Activated naive CD4-positive, alpha-beta T cell treated with anti-CD3 and anti-CD28 coated beads for 36 hours (primary cell): ENCODE measurements at regions of chr14 and their contacts with region 1.

Region 1: GRCh38 chr14:100078991-100079725 is 13.9 kb downstream of the EVL start:
- DNase-seq: peak; percentile 78
- H3K4me3 Mint-ChIP-seq: peak overlapping the region; percentile 74
- H3K27ac Mint-ChIP-seq: peak overlapping the region; percentile 96
- H3K4me1 Mint-ChIP-seq: peaks cover 94% of the 10 kb centered on the region
- H3K27me3 Mint-ChIP-seq: no peaks in the 10 kb centered on the region

Region 2: DNA sequence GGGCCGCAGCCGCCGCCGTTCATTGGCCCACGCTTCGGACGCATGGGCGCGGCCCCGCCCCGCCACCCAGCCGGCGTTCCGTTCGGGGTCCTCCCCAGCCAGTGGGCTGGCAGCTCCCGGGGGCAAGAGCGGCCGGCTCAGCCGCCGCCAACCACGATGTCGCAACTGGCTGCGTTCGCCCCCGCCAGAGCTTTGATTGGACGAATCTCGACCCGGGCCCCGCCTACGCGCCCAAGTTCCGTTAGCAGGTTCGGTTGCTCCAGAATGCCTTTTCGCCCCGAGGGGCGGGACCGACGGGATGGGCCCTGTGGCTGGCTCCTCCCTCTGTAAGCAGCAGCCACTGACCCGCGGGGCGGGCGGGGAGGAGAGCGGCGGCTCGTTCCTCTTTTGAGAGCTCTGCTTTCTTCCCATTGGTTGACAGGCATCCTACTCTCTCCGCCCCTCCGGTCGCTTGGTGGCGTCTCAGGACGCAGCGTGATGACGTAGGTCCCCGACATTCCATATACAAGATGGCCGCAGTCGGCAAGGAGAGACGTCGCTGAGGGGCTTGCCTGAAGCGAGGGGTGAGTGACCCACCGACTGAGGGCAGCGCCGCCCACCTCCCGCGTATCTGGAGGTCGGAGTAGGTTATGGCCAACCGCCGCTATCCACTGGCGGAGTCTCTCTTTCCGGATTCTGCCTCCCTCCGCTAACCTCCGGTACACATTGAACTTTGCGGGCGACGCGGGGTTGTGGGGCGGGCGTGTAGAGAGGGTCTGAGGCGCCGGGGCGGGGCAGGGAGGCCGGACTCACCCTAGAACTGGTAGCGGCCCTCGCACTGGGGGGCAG is 598.0 kb before region 1 on chr14 and contains the start of gene CCNK:
- CTCF ChIA-PET with region 1: no interaction called
- intact Hi-C with region 1: loop called (anchors 10 kb)
- DNase-seq: peak; percentile 100
- H3K4me3 Mint-ChIP-seq: peak within 1 kb of the TSS; percentile 90
- H3K27ac Mint-ChIP-seq: peak within 1 kb of the TSS; percentile 91
- H3K4me1 Mint-ChIP-seq: peaks cover 53% of the 10 kb centered on the region
- H3K27me3 Mint-ChIP-seq: no peaks in the 10 kb centered on the region
- total RNA-seq, gene CCNK: 90.7 to 99.0 TPM

Region 3: GRCh38 chr14:99909513-99910064 is 169.6 kb before region 1 on chr14:
- CTCF ChIA-PET with region 1: no interaction called
- intact Hi-C with region 1: no loop called
- DNase-seq: no peak
- H3K4me3 Mint-ChIP-seq: no peak overlapping the region
- H3K27ac Mint-ChIP-seq: no peak overlapping the region
- H3K4me1 Mint-ChIP-seq: no peaks in the 10 kb centered on the region
- H3K27me3 Mint-ChIP-seq: no peaks in the 10 kb centered on the region

Region 4: DNA sequence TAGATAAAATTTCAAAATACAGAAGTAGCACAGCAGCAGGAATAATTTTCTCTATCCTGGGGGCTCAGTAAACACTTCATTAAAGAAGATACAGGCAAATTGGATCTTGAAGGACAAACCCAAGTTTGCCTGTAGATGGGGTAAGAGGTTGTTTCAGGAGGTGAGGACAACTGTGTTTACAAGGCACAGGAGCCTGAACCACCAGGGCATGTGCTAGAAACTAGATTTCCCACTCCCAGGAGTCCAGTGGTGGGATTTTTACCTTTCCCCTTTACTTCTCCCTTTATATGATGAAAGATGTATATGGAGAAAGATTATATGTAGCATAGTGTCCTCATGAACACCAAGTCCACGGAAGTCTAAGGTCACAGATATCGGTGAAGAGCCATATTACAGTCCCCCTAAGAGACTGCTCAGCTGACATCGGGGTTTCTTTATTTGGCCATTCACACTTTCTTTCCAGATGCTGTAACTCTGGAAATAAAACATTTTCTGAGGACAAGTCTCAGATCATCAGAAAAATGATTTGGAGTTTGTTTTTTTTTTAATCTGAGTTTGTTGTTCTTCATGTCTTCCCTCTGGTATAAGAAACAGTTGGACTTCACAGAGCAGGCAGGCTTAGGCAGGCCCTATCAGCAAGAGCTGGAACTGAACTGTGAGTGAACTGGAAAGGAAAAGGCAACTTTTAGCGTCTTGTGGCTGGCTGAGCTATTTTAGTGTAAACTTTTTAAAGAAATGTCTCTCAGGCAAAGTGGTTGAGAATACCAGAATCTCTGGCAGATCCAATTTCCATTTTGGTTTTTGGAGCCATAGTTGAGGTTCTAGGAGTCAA is 22.0 kb before region 1 on chr14:
- CTCF ChIA-PET with region 1: interaction called, 12 read pairs
- intact Hi-C with region 1: no loop called
- DNase-seq: no peak
- H3K4me3 Mint-ChIP-seq: peak overlapping the region; percentile 25
- H3K27ac Mint-ChIP-seq: peak overlapping the region; percentile 80
- H3K4me1 Mint-ChIP-seq: peaks cover 52% of the 10 kb centered on the region
- H3K27me3 Mint-ChIP-seq: no peaks in the 10 kb centered on the region

Region 5: GRCh38 chr14:100091386-100091785 is 12.2 kb after region 1 on chr14:
- CTCF ChIA-PET with region 1: interaction called, 932 read pairs
- intact Hi-C with region 1: loop called (anchors 1 kb)
- DNase-seq: peak; percentile 30
- H3K4me3 Mint-ChIP-seq: peak overlapping the region; percentile 58
- H3K27ac Mint-ChIP-seq: peak overlapping the region; percentile 85
- H3K4me1 Mint-ChIP-seq: peaks cover 89% of the 10 kb centered on the region
- H3K27me3 Mint-ChIP-seq: no peaks in the 10 kb centered on the region